Naive thymus-derived CD4-positive, alpha-beta T cell (primary cell): ENCODE measurements at regions of chr3 and their contacts with region 1.

Region 1: GRCh38 chr3:152524198-152525140 is 255.7 kb downstream of the MBNL1 start:
- DNase-seq: peak in 6 of 9 donors; percentile 15 to 55 (median 44)
- ATAC-seq: peak; percentile 68
- H3K4me3 ChIP-seq: no peak overlapping the region
- H3K4me3 Mint-ChIP-seq: no peak overlapping the region
- H3K27ac ChIP-seq: no peak overlapping the region
- H3K27ac Mint-ChIP-seq: no peak overlapping the region
- H3K4me1 ChIP-seq: no peaks in the 10 kb centered on the region
- H3K4me1 Mint-ChIP-seq: no peaks in the 10 kb centered on the region
- H3K27me3 ChIP-seq: no peaks in the 10 kb centered on the region
- H3K27me3 Mint-ChIP-seq: peaks cover 0 to 12% (median 0%) of the 10 kb centered on the region in 5 donors

Region 2: DNA sequence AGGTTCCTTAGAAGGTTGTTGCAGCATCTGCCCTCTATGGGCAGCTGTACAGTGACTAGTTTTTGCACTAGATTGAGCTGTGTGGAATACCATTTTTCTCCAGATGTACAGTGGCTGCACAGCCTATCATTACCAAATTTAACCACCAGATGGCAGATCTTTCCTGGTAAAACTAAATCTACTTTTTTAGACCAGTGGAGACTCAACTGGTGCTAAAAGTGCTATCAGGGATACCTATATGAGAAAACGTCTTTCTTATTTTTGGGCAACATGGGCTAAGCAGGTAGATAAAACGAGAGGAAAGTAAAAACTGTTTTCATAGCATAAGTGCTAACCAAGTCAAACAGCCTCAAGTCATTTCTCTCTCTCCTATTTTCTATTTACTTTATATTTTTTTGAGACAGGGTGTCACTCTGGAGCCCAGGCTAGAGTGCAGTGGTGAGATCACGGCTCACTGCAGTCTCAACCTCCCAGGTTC is 1084.8 kb before region 1 on chr3:
- CTCF ChIA-PET with region 1: no interaction called
- POLR2A ChIA-PET with region 1: no interaction called
- intact Hi-C with region 1: loop called in 1 of 2 experiments (anchors 1 kb)
- DNase-seq: peak in 6 of 9 donors; percentile 18 to 33 (median 24)
- ATAC-seq: peak; percentile 65
- H3K4me3 ChIP-seq: no peak overlapping the region
- H3K4me3 Mint-ChIP-seq: no peak overlapping the region
- H3K27ac ChIP-seq: no peak overlapping the region
- H3K27ac Mint-ChIP-seq: no peak overlapping the region
- H3K4me1 ChIP-seq: no peaks in the 10 kb centered on the region
- H3K4me1 Mint-ChIP-seq: no peaks in the 10 kb centered on the region
- H3K27me3 ChIP-seq: no peaks in the 10 kb centered on the region
- H3K27me3 Mint-ChIP-seq: peaks cover 0 to 9% (median 0%) of the 10 kb centered on the region in 5 donors

Region 3: DNA sequence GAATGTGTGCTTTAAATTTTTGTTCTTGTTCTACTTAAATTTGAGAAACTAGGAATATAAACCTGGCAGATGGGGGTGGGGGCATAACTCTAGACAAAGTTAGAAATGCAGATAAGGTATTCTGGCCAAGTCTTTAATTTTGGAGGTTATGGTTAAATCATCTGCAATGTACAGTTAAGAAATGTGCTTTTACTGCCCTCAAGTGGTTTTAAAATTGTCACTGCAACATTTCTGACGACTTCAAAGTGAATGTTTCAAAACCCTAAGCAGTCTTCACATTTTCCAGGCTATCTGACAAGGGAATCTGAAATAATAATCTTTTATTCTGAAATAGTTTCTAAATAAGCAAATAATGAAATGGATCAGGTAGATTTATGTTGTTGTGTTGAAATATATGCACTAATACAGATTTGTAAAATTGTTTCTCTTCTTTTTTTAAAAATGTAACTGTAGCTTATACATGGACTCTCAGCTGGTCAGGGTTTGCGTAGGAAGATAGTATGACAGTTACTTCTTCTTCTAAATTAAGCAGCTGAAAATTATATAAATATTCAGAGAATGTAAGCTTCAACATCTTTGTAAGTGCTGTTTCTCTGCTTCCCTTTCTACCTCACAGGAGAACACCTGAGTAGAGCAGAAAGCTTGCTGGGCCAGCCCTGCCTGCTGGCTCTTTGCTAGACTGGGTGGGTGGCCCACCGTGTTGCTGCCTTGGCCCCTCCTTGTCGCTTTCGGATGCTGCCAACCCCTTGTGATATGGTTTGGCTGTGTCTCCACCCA is 606.0 kb before region 1 on chr3:
- CTCF ChIA-PET with region 1: no interaction called
- POLR2A ChIA-PET with region 1: no interaction called
- intact Hi-C with region 1: loop called in 1 of 2 experiments (anchors 1 kb)
- DNase-seq: peak in 5 of 9 donors; percentile 11 to 40 (median 21)
- ATAC-seq: peak; percentile 57
- H3K4me3 ChIP-seq: no peak overlapping the region
- H3K4me3 Mint-ChIP-seq: no peak overlapping the region
- H3K27ac ChIP-seq: no peak overlapping the region
- H3K27ac Mint-ChIP-seq: no peak overlapping the region
- H3K4me1 ChIP-seq: no peaks in the 10 kb centered on the region
- H3K4me1 Mint-ChIP-seq: no peaks in the 10 kb centered on the region
- H3K27me3 ChIP-seq: no peaks in the 10 kb centered on the region
- H3K27me3 Mint-ChIP-seq: peaks cover 0 to 7% (median 0%) of the 10 kb centered on the region in 5 donors

Region 4: GRCh38 chr3:152071924-152072323 is 452.5 kb before region 1 on chr3:
- CTCF ChIA-PET with region 1: interaction called, 16 read pairs
- POLR2A ChIA-PET with region 1: no interaction called
- intact Hi-C with region 1: loop called (anchors 1 kb)
- DNase-seq: peak in 6 of 9 donors; percentile 10 to 43 (median 32)
- ATAC-seq: peak; percentile 75
- H3K4me3 ChIP-seq: no peak overlapping the region
- H3K4me3 Mint-ChIP-seq: no peak overlapping the region
- H3K27ac ChIP-seq: no peak overlapping the region
- H3K27ac Mint-ChIP-seq: no peak overlapping the region
- H3K4me1 ChIP-seq: peaks cover 0 to 5% of the 10 kb centered on the region in 2 donors
- H3K4me1 Mint-ChIP-seq: peaks cover 0 to 6% (median 3%) of the 10 kb centered on the region in 7 donors
- H3K27me3 ChIP-seq: no peaks in the 10 kb centered on the region
- H3K27me3 Mint-ChIP-seq: peaks cover 0 to 6% (median 0%) of the 10 kb centered on the region in 5 donors

Region 5: GRCh38 chr3:152291649-152292066 is 232.8 kb before region 1 on chr3:
- CTCF ChIA-PET with region 1: no interaction called
- POLR2A ChIA-PET with region 1: no interaction called
- intact Hi-C with region 1: no loop called
- DNase-seq: no peak
- ATAC-seq: peak; percentile 58
- H3K4me3 ChIP-seq: no peak overlapping the region
- H3K4me3 Mint-ChIP-seq: peak overlapping the region; percentile 51 to 78 (median 73)
- H3K27ac ChIP-seq: peak overlapping the region; percentile 40
- H3K27ac Mint-ChIP-seq: peak overlapping the region; percentile 30 to 87 (median 71)
- H3K4me1 ChIP-seq: peaks cover 62 to 82% of the 10 kb centered on the region in 2 donors
- H3K4me1 Mint-ChIP-seq: peaks cover 54 to 96% (median 85%) of the 10 kb centered on the region in 7 donors
- H3K27me3 ChIP-seq: no peaks in the 10 kb centered on the region
- H3K27me3 Mint-ChIP-seq: no peaks in the 10 kb centered on the region

Region 6: DNA sequence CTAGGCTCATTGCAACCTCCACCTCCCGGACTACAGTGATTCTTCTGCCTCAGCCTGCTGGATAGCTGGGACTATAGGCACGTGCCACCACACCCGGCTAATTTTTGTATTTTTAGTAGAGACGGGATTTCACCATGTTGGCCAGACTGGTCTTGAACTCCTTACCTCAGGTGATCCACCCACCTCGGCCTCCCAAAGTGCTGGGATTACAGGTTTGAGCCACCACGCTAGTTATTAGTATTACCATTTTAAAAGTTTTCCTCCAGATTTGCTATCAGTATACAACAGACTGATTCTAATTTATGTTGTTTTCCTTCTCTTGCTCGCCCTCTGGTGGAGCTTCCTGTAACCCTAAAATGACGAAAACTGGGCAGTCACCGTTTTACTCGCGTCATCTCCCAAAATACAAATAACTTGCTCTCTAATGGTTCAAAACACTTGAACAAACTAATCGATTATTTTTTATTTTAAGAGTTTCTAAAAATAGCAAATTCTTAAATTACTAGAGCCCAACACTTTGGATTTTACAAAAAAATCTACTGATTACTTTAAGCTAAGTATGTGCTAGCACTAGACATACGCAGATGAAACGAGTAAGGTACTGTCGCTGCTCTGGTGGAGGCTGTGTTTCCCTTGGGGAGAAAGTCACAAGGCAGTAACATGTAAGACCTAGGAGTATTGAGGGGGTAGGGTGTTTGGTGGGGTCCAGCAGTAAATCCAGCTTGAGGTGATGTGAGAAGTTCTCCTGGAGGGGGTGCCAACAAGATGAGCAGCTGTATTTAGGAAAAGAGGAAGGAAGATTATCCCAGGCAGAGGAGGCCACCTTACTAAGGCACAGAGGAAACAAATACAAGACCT is 52.4 kb before region 1 on chr3:
- CTCF ChIA-PET with region 1: interaction called, 7 read pairs
- POLR2A ChIA-PET with region 1: no interaction called
- intact Hi-C with region 1: loop called (anchors 1 kb)
- DNase-seq: peak; percentile 22 to 80 (median 72)
- ATAC-seq: peak; percentile 93
- H3K4me3 ChIP-seq: peak overlapping the region; percentile 32
- H3K4me3 Mint-ChIP-seq: peak overlapping the region; percentile 6 to 82 (median 72)
- H3K27ac ChIP-seq: peak overlapping the region; percentile 81
- H3K27ac Mint-ChIP-seq: peak overlapping the region; percentile 29 to 96 (median 88)
- H3K4me1 ChIP-seq: peaks cover 4 to 9% of the 10 kb centered on the region in 2 donors
- H3K4me1 Mint-ChIP-seq: peaks cover 0 to 21% (median 12%) of the 10 kb centered on the region in 7 donors
- H3K27me3 ChIP-seq: no peaks in the 10 kb centered on the region
- H3K27me3 Mint-ChIP-seq: peaks cover 0 to 16% (median 0%) of the 10 kb centered on the region in 5 donors